ENCODE measurements at regions of chr18 and their contacts with region 1.

Region 1: DNA sequence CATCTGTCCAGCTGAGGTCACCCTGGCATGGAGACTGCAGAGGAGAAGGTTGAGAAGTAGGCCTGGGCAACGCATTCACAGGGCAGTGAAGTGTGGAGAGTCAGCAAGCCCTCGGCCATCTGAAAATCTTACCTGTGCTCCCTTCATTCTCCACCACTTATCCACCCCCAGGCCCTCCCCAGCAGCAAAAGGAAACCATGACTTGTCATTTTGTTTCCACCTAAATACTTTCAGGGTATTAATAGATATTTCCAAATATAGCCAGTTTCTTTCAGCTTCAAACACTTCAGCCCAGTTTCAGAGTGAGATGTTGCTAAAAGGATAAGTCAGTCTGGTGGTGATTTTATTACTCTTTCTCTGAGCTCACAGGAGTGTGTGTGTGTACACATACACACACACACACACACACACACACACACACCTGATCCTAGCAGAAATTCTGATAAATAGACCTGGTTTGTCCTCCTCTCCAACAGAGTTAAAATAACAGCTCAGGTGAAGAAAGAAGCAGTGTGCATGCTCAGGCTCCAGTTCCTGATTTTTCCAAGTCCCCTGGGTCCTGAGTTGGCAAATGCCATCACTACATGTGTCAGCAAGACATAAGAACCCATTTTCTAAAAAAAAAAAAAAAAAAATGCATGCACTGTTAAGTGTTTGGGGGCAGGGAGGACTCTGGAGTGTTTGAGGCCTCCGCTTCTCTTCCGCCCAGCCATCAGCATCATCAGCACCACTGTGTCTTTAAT is 82.8 kb downstream of the LOXHD1 start:
- DNase-seq: no peak
- ATAC-seq: no peak
- H3K4me3 ChIP-seq: no peak overlapping the region
- H3K27ac ChIP-seq: no peak overlapping the region
- H3K4me1 ChIP-seq: no peaks in the 10 kb centered on the region
- H3K27me3 ChIP-seq: no peaks in the 10 kb centered on the region
- CTCF ChIP-seq: no peak

Region 2: DNA sequence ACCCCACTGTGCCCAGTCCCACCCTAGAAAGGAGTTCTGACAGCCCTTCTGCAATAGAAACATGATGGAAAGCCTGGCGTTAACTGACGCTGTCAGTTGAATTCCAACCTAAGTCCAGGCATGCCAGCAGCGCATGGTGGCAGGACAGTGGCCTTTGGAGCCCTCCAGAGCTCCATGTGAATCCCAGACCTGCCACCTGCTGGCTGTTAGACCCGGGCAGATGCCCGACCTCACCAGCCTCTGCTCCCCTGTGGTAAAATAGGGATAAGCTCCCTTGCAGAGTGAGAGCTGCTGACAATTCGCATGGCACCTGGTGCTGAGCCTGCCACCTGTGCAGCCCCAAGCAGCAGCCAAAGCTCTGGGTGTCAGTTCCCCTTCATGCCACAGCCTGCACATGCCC is 55.7 kb before region 1 on chr18:
- intact Hi-C with region 1: loop called in 1 of 2 experiments (anchors 10 kb)
- DNase-seq: peak in 1 of 4 donors; percentile 3
- ATAC-seq: peak; percentile 40
- H3K4me3 ChIP-seq: no peak overlapping the region
- H3K27ac ChIP-seq: no peak overlapping the region
- H3K4me1 ChIP-seq: no peaks in the 10 kb centered on the region
- H3K27me3 ChIP-seq: peaks cover 0 to 5% of the 10 kb centered on the region in 2 donors
- CTCF ChIP-seq: no peak

Region 3: GRCh38 chr18:46711444-46711863 is 137.3 kb after region 1 on chr18:
- intact Hi-C with region 1: no loop called
- DNase-seq: peak in 1 of 4 donors; percentile 28
- ATAC-seq: no peak
- H3K4me3 ChIP-seq: no peak overlapping the region
- H3K27ac ChIP-seq: no peak overlapping the region
- H3K4me1 ChIP-seq: no peaks in the 10 kb centered on the region
- H3K27me3 ChIP-seq: no peaks in the 10 kb centered on the region
- CTCF ChIP-seq: no peak